ACHN (cell line): ENCODE measurements at regions of chr20 and their contacts with region 1.

Region 1: DNA sequence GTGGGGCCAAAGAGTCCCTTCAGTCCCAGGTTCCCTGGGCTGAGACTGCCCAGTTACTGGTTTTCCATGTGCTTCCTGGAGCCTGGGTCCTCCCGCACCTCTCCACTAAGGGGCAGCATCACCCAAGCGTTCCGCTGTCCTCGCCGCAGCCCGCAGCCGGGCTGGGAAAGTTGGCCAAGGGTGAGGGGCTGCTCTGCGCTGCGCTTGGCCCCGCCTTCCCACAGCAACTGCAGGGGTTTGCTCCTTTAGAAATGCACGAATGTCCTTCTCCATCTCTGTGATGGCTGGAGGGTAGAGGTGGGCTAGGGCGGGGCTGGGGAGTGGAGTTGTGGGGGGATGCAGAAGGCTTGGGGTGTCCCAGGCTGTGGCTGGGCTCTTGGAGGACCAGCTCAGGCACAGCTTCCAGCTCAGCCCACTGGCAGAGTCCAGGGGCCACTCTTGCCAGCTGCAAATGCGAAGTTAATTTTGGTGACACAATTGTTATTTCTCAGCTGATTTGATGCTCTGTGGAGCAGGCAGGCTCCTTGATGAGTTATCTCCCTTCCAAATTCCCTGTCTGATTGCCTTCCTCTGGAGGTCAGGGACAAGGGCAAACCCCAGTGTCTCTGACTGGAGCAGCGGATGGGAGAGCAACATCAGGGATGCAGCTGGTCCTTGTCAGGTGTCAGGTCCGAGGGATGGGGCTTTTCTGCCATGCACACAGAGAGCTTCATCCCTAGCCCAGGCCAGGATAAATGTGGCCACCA is 63.2 kb downstream of the NOL4L start:
- DNase-seq: peak; percentile 52

Region 2: DNA sequence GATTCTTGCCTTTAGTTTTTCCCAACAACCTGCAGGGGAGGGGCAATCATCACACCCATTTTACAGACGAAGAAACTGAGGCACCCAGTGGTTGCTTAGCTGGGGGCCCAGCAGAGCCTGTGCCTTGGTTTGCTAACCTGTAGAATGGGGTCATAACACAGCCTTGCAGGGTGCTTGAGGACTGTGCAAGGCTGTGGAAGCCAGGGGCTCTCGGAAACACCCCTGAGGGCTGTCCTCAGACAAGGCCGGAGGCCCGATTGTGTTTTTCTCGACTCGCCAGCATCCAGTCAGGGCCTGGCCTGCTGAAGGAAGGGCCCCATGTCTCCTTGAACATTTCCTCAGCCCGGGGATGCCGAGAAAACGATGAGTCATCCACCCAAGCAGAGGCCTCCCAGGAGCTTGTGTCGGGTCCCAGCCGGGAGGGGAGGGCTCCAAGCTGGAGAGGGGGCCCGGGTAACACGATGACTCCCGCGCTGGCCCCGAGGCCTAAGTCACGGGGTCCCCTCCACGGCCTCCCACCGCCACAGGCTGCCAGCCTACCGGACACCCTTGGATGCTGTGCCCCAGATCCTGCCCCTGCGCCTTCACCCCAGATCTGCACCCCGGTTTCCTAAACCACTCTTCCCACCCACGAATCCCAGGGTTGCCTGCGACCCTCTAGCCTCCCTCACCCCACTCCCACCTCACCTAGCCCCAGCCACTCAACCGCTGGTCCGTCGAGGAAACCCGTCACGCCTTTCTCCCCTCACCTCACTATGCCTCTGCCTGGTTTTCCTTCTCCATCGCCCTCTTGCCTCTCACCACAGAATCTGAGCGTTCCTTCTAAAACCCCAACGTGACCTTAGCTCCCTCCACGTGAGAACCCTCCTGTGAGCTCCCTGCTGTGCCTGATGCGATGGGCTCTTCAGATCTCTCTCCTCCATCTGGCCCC is 52.6 kb after region 1 on chr20:
- in situ Hi-C with region 1: no loop called
- DNase-seq: peak; percentile 56

Region 3: DNA sequence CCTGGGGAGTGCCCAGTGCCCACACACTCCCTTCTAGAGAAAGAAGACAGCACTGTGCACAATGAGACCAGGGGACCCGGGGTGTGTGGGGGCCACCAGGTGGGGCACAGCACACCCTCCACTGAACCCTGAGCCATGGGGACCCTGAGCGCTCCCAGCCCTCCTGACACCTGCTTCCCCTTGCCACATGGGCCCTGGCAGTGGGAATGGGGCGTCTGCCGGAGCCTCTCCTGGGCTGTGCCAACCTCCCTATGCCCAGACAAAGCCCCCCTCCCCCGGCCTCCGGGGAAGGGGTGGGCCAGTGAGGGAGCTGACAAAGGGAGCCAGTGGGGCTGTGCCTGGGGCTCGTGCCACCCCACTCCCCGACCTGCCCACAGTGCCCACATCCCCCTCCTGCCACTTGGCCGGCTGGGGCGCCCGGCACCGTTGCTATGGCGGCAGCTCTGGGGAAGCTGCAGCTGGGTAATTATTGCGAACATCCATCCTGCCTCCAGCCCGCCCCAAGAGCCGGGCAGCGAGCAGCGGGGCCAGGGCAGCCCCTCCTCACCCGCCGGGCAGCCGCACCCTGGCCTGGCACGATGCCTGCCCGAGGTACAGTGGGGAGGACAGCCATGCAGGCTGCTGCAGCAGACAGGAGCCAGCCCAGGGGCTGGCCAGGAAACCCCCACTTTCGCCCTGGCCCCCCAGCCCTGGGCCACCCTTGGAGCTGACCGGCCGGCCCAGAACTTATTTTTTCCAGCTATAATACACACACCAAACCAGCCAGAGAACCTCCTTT is 105.1 kb after region 1 on chr20:
- in situ Hi-C with region 1: loop called (anchors 25 kb)
- DNase-seq: no peak